Mammary epithelial cell (primary cell): ENCODE measurements at regions of chr10 and their contacts with region 1.

Region 1: GRCh38 chr10:122565728-122566206 is 5.2 kb downstream of the DMBT1 start:
- DNase-seq: peak; percentile 78
- H3K4me3 ChIP-seq: peak overlapping the region in 2 of 3 experiments; percentile 22 to 27
- H3K27ac ChIP-seq: no peak overlapping the region
- H3K4me1 ChIP-seq: peaks cover 6% of the 10 kb centered on the region
- H3K27me3 ChIP-seq: no peaks in the 10 kb centered on the region
- CTCF ChIP-seq: peak; percentile 87 to 89

Region 2: DNA sequence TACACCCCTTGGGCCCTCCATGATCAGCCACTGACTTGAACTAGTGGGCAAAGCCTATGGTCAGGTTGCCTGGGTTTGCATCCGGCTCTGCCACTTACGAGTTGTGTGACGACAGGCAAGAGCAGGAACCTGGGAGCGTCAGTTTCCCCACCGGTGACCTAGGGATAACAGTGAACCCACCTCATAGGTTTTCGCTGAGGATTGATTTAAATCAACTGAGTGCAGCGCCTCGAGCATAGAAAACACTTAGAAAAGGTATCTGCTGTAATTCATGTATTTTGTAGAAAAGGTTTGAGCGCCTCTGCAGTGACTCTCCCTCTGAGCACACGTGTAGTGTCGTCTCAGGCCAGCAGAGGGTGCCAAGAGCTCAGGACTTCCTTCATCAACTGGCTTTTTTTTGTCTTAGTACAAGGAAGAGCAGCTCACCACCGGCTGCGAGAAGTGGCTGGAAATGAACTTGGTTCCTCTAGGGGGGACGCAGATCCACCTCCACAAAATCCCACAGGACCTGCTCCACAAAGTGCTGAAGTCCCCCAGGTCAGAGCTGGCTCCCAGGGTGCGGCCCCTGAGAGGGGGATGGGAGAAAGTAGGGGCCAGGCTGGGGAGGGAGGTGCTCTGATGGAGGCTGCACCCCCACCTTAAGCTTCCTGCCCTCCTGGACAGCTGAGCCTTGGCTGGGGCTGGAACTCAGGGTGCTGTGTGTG is 267.0 kb before region 1 on chr10:
- CTCF ChIA-PET with region 1: interaction called, 9 read pairs
- dilution Hi-C with region 1: no loop called
- in situ Hi-C with region 1: loop called (anchors 10 to 25 kb)
- intact Hi-C with region 1: loop called (anchors 1 kb)
- DNase-seq: peak; percentile 60
- H3K4me3 ChIP-seq: peak overlapping the region in 1 of 3 experiments; percentile 4
- H3K27ac ChIP-seq: no peak overlapping the region
- H3K4me1 ChIP-seq: peaks cover 16% of the 10 kb centered on the region
- H3K27me3 ChIP-seq: no peaks in the 10 kb centered on the region
- CTCF ChIP-seq: peak; percentile 92 to 98

Region 3: DNA sequence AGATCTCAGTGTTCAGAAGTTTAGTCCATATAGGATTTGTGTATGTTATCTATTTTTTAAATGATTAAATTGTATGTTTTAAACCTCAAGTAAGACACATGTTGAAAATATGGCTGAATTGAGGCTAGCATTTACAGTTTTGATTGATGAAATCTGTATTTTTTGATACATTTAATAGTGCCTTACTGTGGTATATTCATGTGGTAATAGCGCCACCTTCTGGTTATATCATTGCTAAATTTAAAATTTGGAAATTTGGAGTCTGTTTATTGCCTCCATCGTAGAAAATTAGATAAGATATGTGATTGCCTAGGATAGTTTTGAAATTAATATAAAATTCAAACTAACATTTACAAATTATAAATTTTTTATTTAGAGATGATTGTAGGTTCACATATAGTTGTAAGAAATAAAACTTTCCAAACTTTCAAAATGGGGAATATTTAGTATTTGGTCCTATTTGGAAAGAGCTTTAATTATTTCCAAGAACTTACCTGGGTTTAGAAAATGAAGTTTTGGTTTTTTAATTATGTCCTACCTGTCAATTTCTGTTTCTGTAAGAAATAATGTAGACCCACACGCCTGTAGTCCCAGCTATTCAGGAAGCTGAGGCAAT is 130.4 kb before region 1 on chr10:
- CTCF ChIA-PET with region 1: interaction called, 17 read pairs
- dilution Hi-C with region 1: no loop called
- in situ Hi-C with region 1: no loop called
- intact Hi-C with region 1: loop called (anchors 1 kb)
- DNase-seq: no peak
- H3K4me3 ChIP-seq: no peak overlapping the region
- H3K27ac ChIP-seq: no peak overlapping the region
- H3K4me1 ChIP-seq: no peaks in the 10 kb centered on the region
- H3K27me3 ChIP-seq: no peaks in the 10 kb centered on the region
- CTCF ChIP-seq: peak; percentile 44 to 54

Region 4: GRCh38 chr10:122461367-122461728 is 104.4 kb before region 1 on chr10 and contains the start of gene HTRA1:
- CTCF ChIA-PET with region 1: no interaction called
- dilution Hi-C with region 1: no loop called
- in situ Hi-C with region 1: loop called in 1 of 2 experiments (anchors 10 kb)
- intact Hi-C with region 1: loop called (anchors 1 kb)
- DNase-seq: peak; percentile 70
- H3K4me3 ChIP-seq: peak within 1 kb of the TSS; percentile 71 to 99 (median 96)
- H3K27ac ChIP-seq: peak within 1 kb of the TSS; percentile 65
- H3K4me1 ChIP-seq: peaks cover 27% of the 10 kb centered on the region
- H3K27me3 ChIP-seq: no peaks in the 10 kb centered on the region
- CTCF ChIP-seq: no peak
- total RNA-seq, gene HTRA1: 179 to 311 TPM

Region 5: DNA sequence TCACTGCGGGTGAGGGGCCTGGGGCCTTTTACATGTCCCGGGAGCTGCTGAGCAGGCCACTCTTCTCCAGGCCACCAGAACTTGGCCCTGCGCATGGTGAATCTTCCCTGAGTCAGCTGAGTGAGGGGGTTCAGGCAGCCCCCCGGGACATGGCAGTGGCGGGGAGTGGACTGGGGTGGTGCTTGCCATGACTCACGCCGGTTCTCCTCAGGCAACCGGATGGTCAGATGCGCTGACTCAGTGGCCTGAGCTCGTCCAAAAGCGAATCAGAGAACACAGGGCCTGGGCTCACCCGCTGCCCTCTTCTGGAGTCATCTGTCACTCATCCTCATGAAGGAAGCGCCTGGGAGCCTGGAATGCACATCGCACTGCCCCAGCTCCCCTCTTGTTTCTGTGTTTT is 70.9 kb before region 1 on chr10:
- CTCF ChIA-PET with region 1: no interaction called
- dilution Hi-C with region 1: no loop called
- in situ Hi-C with region 1: no loop called
- intact Hi-C with region 1: loop called (anchors 5 kb)
- DNase-seq: peak; percentile 87
- H3K4me3 ChIP-seq: peak overlapping the region; percentile 7 to 45 (median 26)
- H3K27ac ChIP-seq: peak overlapping the region; percentile 88
- H3K4me1 ChIP-seq: peaks cover 66% of the 10 kb centered on the region
- H3K27me3 ChIP-seq: no peaks in the 10 kb centered on the region
- CTCF ChIP-seq: no peak

Region 6: GRCh38 chr10:122703439-122704118 is 137.8 kb after region 1 on chr10:
- CTCF ChIA-PET with region 1: no interaction called
- dilution Hi-C with region 1: no loop called
- in situ Hi-C with region 1: no loop called
- intact Hi-C with region 1: loop called (anchors 1 kb)
- DNase-seq: peak; percentile 65
- H3K4me3 ChIP-seq: no peak overlapping the region
- H3K27ac ChIP-seq: no peak overlapping the region
- H3K4me1 ChIP-seq: no peaks in the 10 kb centered on the region
- H3K27me3 ChIP-seq: no peaks in the 10 kb centered on the region
- CTCF ChIP-seq: peak; percentile 93 to 97